Heart right ventricle (tissue), 16 donors: ENCODE measurements at regions of chr2 and their contacts with region 1.

Region 1: GRCh38 chr2:12931186-12931844 is 214.6 kb downstream of the TRIB2 start:
- DNase-seq: peak in 1 of 2 donors; percentile 45
- ATAC-seq: peak; percentile 78 to 88 (median 86)
- H3K4me3 ChIP-seq: no peak overlapping the region
- H3K27ac ChIP-seq: peak overlapping the region in 7 of 10 donors; percentile 0 to 59 (median 7)
- H3K4me1 ChIP-seq: peaks cover 7 to 53% (median 39%) of the 10 kb centered on the region in 9 donors
- H3K27me3 ChIP-seq: no peaks in the 10 kb centered on the region
- CTCF ChIP-seq: peak; percentile 80 to 96 (median 92)

Region 2: DNA sequence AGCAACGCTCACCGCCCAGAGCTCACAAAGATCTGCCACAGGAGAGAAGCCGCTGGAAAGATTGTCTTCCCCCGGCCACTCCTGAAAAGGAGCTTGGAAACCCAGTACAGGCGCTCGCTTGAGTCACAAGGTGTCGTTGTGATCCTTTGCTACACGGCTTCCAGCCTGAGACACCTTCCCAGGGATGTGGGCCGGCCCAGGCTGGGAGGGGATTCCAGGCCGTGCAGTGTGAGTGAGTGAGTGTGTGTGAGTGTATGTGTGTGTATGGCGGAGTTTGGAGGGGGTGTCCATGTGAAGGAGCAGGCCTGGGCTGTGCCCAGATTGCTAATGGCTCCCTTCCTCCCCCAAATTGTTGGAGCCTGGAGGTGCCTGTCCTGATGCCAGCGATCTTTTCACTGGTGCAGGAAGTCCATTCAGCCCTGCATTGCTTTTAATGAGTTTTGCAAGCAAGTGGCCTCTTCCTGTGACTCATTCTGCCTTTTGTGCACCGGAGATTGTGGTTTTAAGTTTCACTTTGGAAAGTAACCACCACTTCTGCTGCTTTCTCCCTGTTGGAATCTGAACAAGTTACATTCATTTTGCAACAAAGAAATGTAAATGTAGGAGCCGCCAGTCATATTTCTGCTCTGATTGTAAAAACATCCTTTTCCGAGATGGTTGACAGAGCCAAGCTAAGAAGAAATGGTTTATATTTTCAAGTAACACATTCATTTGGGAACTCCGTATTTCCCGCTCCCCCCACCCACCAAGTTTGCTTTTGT is 1101.2 kb before region 1 on chr2:
- intact Hi-C with region 1: loop called in 7 of 10 experiments (anchors 5 to 10 kb)
- DNase-seq: peak; percentile 51 to 69
- ATAC-seq: peak; percentile 78 to 93 (median 89)
- H3K4me3 ChIP-seq: peak overlapping the region in 7 of 10 donors; percentile 25 to 45 (median 29)
- H3K27ac ChIP-seq: peak overlapping the region; percentile 21 to 90 (median 75)
- H3K4me1 ChIP-seq: peaks cover 8 to 47% (median 29%) of the 10 kb centered on the region in 9 donors
- H3K27me3 ChIP-seq: no peaks in the 10 kb centered on the region
- CTCF ChIP-seq: peak in 6 of 9 donors; percentile 20 to 58 (median 44)

Region 3: GRCh38 chr2:12176623-12177454 is 754.5 kb before region 1 on chr2:
- intact Hi-C with region 1: loop called in 1 of 10 experiments (anchors 10 kb)
- DNase-seq: peak; percentile 32 to 71
- ATAC-seq: peak; percentile 63 to 95 (median 91)
- H3K4me3 ChIP-seq: no peak overlapping the region
- H3K27ac ChIP-seq: peak overlapping the region in 5 of 10 donors; percentile 10 to 73 (median 48)
- H3K4me1 ChIP-seq: peaks cover 3 to 32% (median 25%) of the 10 kb centered on the region in 9 donors
- H3K27me3 ChIP-seq: no peaks in the 10 kb centered on the region
- CTCF ChIP-seq: no peak

Region 4: GRCh38 chr2:12555012-12555645 is 376.2 kb before region 1 on chr2:
- intact Hi-C with region 1: loop called in 1 of 10 experiments (anchors 10 kb)
- DNase-seq: no peak
- ATAC-seq: peak in 6 of 8 donors; percentile 42 to 76 (median 57)
- H3K4me3 ChIP-seq: no peak overlapping the region
- H3K27ac ChIP-seq: peak overlapping the region in 7 of 10 donors; percentile 16 to 61 (median 43)
- H3K4me1 ChIP-seq: peaks cover 5 to 28% (median 14%) of the 10 kb centered on the region in 9 donors
- H3K27me3 ChIP-seq: no peaks in the 10 kb centered on the region
- CTCF ChIP-seq: peak in 4 of 9 donors; percentile 10 to 39 (median 32)

Region 5: GRCh38 chr2:12807907-12808810 is 123.2 kb before region 1 on chr2:
- intact Hi-C with region 1: loop called in 3 of 10 experiments (anchors 5 to 10 kb)
- DNase-seq: peak in 1 of 2 donors; percentile 23
- ATAC-seq: peak; percentile 46 to 92 (median 76)
- H3K4me3 ChIP-seq: no peak overlapping the region
- H3K27ac ChIP-seq: peak overlapping the region; percentile 28 to 87 (median 67)
- H3K4me1 ChIP-seq: peaks cover 10 to 70% (median 42%) of the 10 kb centered on the region in 9 donors
- H3K27me3 ChIP-seq: no peaks in the 10 kb centered on the region
- CTCF ChIP-seq: no peak

Region 6: DNA sequence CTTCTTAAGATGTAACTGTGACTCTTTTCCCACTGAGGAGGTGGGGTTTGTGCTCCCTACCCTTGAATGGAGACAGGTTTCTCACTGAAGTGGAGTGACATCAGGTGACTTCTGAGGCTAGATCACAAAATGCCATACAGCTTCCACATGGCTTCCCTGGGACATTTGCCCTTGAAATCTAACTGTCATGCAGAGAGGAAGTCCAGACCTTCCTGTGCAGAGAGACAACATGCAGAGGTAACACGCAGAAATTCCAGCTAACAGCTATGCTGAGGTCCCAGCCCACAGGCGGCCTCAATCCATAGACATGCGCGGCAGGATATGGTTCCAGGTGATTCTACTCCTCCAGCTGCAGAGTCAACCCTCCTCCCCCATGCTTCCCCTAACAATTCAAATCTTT is 95.6 kb before region 1 on chr2:
- intact Hi-C with region 1: loop called in 1 of 10 experiments (anchors 10 kb)
- DNase-seq: peak in 1 of 2 donors; percentile 42
- ATAC-seq: peak; percentile 55 to 87 (median 72)
- H3K4me3 ChIP-seq: no peak overlapping the region
- H3K27ac ChIP-seq: peak overlapping the region in 8 of 10 donors; percentile 17 to 56 (median 36)
- H3K4me1 ChIP-seq: peaks cover 0 to 31% (median 21%) of the 10 kb centered on the region in 9 donors
- H3K27me3 ChIP-seq: no peaks in the 10 kb centered on the region
- CTCF ChIP-seq: no peak

Region 7: DNA sequence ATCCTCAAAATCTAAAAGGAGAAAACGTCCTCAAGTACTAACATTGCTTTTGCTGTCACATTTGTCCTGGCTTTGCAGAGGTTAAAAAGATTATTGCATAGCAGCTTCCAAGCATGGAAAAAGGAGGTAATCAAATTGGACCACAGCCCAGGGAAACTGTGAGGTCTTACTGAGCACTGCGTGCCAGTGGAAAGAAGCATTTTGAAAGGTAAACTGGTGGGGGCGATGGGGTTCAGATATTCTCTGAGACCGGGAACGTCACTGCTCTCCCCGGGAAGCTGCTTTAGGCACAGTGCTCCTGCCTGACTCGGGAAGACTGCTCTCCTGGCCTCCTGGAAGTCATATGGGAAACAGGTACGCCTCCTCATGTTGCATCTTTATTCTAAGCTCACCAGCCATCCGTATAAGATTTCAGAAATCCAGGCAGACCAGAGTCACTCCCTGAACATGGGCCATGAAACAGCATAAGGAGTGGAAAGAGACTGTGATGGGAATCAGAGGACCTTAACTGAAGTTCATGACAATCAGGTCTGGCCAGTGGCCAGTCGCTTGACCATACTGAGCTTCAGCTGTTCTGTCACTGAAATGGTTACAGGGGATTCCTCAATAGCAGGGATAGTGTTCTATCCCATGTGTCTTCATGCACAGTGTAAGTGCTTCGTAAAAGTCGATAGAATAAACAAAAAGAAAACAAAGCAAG is 69.5 kb after region 1 on chr2:
- intact Hi-C with region 1: loop called in 8 of 10 experiments (anchors 2 to 10 kb)
- DNase-seq: peak in 1 of 2 donors; percentile 83
- ATAC-seq: peak; percentile 36 to 90 (median 82)
- H3K4me3 ChIP-seq: peak overlapping the region in 9 of 10 donors; percentile 2 to 41 (median 30)
- H3K27ac ChIP-seq: peak overlapping the region in 9 of 10 donors; percentile 13 to 75 (median 63)
- H3K4me1 ChIP-seq: peaks cover 0 to 51% (median 30%) of the 10 kb centered on the region in 9 donors
- H3K27me3 ChIP-seq: no peaks in the 10 kb centered on the region
- CTCF ChIP-seq: no peak